Left colon (tissue), 2 donors: ENCODE measurements at regions of chr6 and their contacts with region 1.

Region 1: GRCh38 chr6:166275714-166276166 is 32.5 kb downstream of the PRR18 start:
- DNase-seq: peak in 1 of 2 donors; percentile 77
- ATAC-seq: peak; percentile 88

Region 2: GRCh38 chr6:166003569-166003968 is 272.2 kb before region 1 on chr6:
- intact Hi-C with region 1: no loop called
- DNase-seq: no peak
- ATAC-seq: no peak

Region 3: DNA sequence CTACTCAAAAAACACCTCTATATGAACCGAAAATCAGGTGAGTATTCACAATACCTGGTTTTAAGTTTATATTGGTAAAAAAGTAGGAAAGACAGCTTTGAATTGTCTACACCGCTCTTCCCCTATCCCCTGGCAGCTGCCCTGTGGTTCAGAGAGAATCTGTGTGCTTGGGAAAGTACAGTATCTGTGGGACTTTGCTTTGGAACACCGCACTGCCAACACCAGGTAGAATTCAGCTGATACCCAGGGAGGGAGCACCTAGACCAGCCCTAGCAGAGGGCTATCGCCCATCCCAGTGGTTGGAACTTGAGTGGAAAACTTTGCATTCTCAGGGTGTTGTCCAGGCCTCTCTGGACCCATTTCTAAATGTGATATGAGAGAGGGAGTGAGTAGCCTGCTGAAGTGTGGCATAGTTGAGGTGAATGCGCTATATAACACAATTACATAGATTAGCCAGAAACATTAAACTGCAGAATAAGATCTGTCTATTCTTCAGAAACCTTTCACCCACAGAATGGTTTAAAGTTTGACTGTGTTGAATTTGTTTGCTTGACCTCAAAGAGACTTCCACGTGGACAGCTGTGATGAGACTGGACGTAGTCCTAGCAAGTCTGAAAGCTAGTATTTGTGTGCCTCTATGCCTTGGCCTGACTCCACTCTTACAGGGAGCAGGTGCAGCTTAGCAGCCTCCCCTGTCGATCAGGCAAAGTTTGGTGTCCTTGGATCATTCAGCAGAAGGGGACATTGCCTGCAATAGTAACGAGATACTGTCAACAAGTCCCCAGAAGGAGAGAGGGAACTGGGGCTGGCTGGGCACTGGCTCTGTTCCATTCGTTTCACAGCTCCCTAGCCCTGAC is 118.5 kb after region 1 on chr6:
- intact Hi-C with region 1: loop called in 1 of 2 experiments (anchors 10 kb)
- DNase-seq: no peak
- ATAC-seq: no peak

Region 4: DNA sequence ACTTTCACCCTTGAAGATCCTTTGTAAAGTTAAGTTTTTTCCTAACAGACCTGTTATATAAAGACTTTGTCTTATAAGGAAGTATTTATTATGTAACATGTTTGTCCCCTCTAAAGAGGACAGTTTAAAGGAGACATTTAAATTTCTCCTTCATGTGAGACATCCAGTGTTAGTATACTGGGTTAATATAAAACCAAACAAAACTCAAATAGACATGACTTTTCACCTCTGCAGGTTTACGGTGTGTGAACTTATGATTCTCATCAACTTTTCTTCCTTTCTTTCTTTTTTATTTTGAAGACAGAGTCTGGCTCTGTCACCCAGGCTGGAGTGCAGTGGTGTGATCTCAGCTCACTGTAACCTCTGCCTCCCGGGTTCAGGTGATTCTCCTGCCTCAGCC is 124.4 kb after region 1 on chr6:
- intact Hi-C with region 1: loop called (anchors 2 to 10 kb)
- DNase-seq: no peak
- ATAC-seq: peak; percentile 44

Region 5: GRCh38 chr6:166512567-166512966 is 236.8 kb after region 1 on chr6:
- intact Hi-C with region 1: no loop called
- DNase-seq: peak in 1 of 2 donors; percentile 51
- ATAC-seq: peak; percentile 60

Region 6: DNA sequence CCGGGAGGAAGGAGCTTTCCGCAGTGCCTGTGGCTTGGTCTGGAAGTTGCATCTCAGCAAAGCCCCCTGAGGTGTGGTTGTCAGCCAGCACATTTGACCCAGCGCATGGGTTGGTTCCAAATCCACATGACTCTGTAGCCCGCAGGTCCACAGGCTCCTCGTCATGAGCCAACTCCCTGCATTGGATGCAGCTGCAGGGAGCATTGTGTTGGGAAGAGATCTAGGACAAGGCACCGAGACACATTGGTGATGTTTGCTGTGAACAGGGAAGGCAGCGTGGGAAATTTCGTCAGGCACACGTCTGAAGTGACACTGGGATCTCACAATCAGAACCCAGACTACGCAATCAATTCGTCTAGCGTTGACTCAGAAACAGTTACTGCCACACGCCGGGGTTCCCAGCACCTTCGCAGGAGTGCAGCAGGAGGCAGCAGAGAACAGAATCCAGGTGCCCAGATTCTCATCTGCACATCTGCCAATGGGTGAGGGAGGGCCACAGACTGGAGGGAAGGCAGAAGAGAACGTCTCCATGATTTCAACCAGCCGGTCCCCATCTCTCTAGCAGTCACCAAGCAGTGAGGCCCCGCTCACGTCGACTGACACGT is 1226.1 kb after region 1 on chr6:
- intact Hi-C with region 1: no loop called
- DNase-seq: peak; percentile 52 to 70
- ATAC-seq: peak; percentile 69